CD8-positive, alpha-beta T cell (primary cell): ENCODE measurements at regions of chr17 and their contacts with region 1.

Region 1: DNA sequence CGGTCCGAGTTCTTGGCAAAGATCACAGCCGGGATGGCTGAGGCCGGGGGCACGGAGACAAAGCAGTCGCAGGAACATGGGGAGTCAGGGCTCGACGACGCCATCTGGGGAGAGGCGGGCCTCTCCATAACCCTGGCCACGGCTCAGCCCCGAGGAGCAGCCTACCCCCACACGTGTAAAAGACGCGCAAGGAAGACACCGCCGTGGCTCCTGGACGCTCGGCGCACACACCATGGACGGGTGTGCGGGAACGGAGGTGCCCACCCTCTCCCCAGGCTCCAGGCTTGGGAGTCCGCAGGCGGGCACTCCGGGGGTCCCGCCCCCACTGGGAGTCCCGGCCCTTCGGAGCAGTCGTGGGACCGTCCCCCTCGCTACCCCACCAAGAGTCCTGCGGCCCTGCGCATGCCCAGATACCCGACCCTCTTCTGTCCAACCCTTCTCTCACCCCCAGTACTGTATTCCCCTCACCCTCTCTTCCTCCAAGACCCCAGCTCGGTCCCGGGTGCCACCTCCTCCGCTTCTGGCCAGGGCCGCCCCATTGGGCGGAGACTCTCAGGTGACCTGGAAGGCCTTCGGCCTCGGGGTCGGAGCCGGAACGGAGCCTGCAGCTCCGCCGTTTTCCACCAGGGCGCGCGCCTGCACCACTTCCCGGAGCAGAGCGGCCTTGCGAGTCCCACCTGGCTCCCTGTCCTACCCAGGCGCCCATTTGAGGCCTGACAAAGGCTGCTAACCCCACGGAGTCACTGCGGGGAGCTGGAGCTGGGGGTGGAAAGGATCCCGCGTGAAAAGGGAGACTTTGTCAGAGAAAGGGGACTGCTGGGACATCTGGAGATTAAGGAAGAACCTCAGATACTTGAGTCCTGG is at the start of gene SCRN2:
- DNase-seq: peak; percentile 71 to 93 (median 88)
- ATAC-seq: peak; percentile 91
- H3K4me3 ChIP-seq: peak within 1 kb of the TSS; percentile 86 to 97
- H3K4me3 Mint-ChIP-seq: peak within 1 kb of the TSS; percentile 92
- H3K27ac ChIP-seq: peak within 1 kb of the TSS; percentile 58 to 61
- H3K27ac Mint-ChIP-seq: peak within 1 kb of the TSS; percentile 87
- H3K4me1 ChIP-seq: peaks cover 33% of the 10 kb centered on the region
- H3K4me1 Mint-ChIP-seq: peaks cover 28% of the 10 kb centered on the region
- H3K27me3 ChIP-seq: peaks cover 8 to 12% of the 10 kb centered on the region in 2 experiments
- H3K27me3 Mint-ChIP-seq: peaks cover 24% of the 10 kb centered on the region
- CTCF ChIP-seq: peak; percentile 97
- total RNA-seq, gene SCRN2: 17.6 to 19.8 TPM

Region 2: DNA sequence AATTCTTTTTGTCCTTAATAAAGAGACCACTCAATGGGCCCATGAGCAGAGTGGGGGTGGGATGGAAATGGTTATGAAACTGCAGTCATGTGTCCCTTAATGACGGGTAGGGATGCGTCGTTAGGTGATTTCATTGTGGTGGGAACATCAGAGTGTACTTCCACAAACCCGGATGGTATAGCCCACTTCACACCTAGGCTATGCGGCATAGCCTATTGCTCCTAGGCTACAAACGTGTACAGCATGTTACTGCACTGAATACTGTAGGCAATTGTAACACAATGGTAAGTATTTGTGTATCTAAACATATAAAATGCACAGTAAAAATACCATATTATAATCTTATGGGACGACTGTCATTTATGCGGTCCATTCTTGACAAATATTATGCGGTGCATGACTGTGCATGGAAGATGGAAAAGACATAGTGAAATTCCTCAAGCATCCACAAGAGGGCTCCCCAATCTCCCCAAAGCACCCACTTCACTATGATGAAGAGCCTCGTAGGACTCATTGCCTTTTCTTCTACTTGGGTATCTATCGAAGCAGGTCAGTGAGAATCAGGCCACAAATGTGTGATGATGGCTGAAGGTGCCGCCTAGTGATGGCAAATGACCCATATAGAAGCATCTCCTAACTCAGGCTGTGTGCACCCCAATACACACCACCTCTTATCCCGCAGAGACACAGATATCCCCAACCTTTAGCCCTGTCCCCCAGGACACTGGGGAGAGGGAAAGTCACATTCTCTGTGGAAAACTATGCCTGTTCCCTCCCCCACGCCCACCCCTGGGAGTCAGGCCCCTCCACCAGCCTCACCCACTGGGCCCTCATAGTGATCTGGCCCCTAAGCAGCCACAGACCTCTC is 64.4 kb before region 1 on chr17:
- CTCF ChIA-PET with region 1: no interaction called
- POLR2A ChIA-PET with region 1: no interaction called
- intact Hi-C with region 1: loop called in 1 of 2 experiments (anchors 2 kb)
- DNase-seq: peak in 6 of 9 experiments; percentile 24 to 73 (median 32)
- ATAC-seq: peak; percentile 96
- H3K4me3 ChIP-seq: no peak overlapping the region
- H3K4me3 Mint-ChIP-seq: no peak overlapping the region
- H3K27ac ChIP-seq: no peak overlapping the region
- H3K27ac Mint-ChIP-seq: no peak overlapping the region
- H3K4me1 ChIP-seq: no peaks in the 10 kb centered on the region
- H3K4me1 Mint-ChIP-seq: peaks cover 3% of the 10 kb centered on the region
- H3K27me3 ChIP-seq: peaks cover 8 to 11% of the 10 kb centered on the region in 2 experiments
- H3K27me3 Mint-ChIP-seq: peaks cover 41% of the 10 kb centered on the region
- CTCF ChIP-seq: peak; percentile 88

Region 3: DNA sequence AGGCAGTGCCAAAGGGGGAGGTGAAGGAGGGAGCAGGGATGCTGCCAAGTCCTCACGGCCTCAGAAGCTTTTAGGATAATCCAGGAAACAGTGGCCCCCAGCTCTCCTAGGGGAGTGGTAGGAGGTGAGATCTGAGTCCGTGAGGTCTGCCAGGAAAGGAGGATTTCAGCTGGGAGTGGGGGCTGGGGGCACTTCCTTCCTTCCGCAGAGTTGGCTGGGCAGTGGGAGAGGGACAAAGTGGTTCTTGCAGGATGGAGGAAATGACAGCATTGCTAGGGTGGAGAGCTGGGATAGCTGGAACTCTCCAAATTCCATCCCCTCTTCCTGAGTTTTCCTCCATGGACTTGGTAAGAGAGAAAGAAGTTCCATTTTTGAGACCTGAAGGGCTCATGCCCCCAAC is 14.8 kb after region 1 on chr17:
- CTCF ChIA-PET with region 1: interaction called, 21 read pairs
- POLR2A ChIA-PET with region 1: no interaction called
- intact Hi-C with region 1: no loop called
- DNase-seq: no peak
- ATAC-seq: no peak
- H3K4me3 ChIP-seq: no peak overlapping the region
- H3K4me3 Mint-ChIP-seq: no peak overlapping the region
- H3K27ac ChIP-seq: no peak overlapping the region
- H3K27ac Mint-ChIP-seq: no peak overlapping the region
- H3K4me1 ChIP-seq: peaks cover 21% of the 10 kb centered on the region
- H3K4me1 Mint-ChIP-seq: peaks cover 9% of the 10 kb centered on the region
- H3K27me3 ChIP-seq: peaks cover 16 to 23% of the 10 kb centered on the region in 2 experiments
- H3K27me3 Mint-ChIP-seq: peaks cover 61% of the 10 kb centered on the region
- CTCF ChIP-seq: no peak

Region 4: GRCh38 chr17:47889734-47890529 is 49.0 kb after region 1 on chr17:
- CTCF ChIA-PET with region 1: interaction called, 583 read pairs
- POLR2A ChIA-PET with region 1: interaction called, 26 read pairs
- intact Hi-C with region 1: loop called (anchors 1 kb)
- DNase-seq: peak; percentile 80 to 97 (median 90)
- ATAC-seq: peak; percentile 99
- H3K4me3 ChIP-seq: no peak overlapping the region
- H3K4me3 Mint-ChIP-seq: no peak overlapping the region
- H3K27ac ChIP-seq: no peak overlapping the region
- H3K27ac Mint-ChIP-seq: no peak overlapping the region
- H3K4me1 ChIP-seq: peaks cover 22% of the 10 kb centered on the region
- H3K4me1 Mint-ChIP-seq: peaks cover 29% of the 10 kb centered on the region
- H3K27me3 ChIP-seq: no peaks in the 10 kb centered on the region
- H3K27me3 Mint-ChIP-seq: no peaks in the 10 kb centered on the region
- CTCF ChIP-seq: peak; percentile 96

Region 5: GRCh38 chr17:47941236-47941994 is 100.4 kb after region 1 on chr17 and contains the start of gene PNPO:
- CTCF ChIA-PET with region 1: interaction called, 6 read pairs
- POLR2A ChIA-PET with region 1: no interaction called
- intact Hi-C with region 1: loop called in 1 of 2 experiments (anchors 1 kb)
- DNase-seq: peak; percentile 82 to 98 (median 92)
- ATAC-seq: peak; percentile 97
- H3K4me3 ChIP-seq: peak within 1 kb of the TSS; percentile 72 to 92
- H3K4me3 Mint-ChIP-seq: peak within 1 kb of the TSS; percentile 86
- H3K27ac ChIP-seq: peak within 1 kb of the TSS; percentile 57 to 88
- H3K27ac Mint-ChIP-seq: peak within 1 kb of the TSS; percentile 87
- H3K4me1 ChIP-seq: peaks cover 47% of the 10 kb centered on the region
- H3K4me1 Mint-ChIP-seq: peaks cover 54% of the 10 kb centered on the region
- H3K27me3 ChIP-seq: no peaks in the 10 kb centered on the region
- H3K27me3 Mint-ChIP-seq: no peaks in the 10 kb centered on the region
- CTCF ChIP-seq: no peak
- total RNA-seq, gene PNPO: 5.7 to 5.8 TPM

Region 6: DNA sequence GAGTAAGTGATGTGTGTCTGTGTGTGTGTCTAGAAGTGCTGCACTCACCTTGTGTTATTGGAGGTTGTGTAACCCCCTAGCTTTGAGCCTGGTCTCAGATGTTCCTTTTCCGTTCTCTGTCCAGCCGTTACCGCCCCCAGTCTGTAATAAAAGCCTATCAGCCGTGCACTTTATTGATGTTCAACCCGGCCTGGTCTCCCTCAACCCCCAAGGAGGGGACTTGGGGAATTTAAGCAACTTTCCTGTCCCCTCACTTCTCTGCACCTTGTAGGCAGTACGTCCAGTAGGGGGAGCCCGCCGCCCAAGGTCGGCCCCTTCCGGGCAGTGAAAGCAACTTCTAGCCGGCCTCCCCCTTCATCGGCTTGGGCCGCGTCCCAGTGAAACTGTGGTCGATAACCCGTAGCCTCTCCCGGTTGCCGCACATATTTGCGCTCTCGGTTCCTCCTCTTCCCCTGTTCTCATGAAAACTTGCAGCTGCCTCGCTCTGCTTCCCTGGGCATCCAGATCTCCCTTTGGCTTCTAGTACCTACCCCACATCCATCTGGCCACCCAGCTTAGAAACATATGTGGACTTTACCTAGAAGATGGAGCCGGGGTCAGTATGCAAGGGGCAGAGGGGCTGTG is 108.3 kb after region 1 on chr17:
- CTCF ChIA-PET with region 1: interaction called, 13 read pairs
- POLR2A ChIA-PET with region 1: interaction called, 3 read pairs
- intact Hi-C with region 1: no loop called
- DNase-seq: peak; percentile 47 to 88 (median 79)
- ATAC-seq: peak; percentile 53
- H3K4me3 ChIP-seq: peak overlapping the region; percentile 26 to 36
- H3K4me3 Mint-ChIP-seq: peak overlapping the region; percentile 82
- H3K27ac ChIP-seq: peak overlapping the region in 1 of 2 experiments; percentile 28
- H3K27ac Mint-ChIP-seq: peak overlapping the region; percentile 81
- H3K4me1 ChIP-seq: peaks cover 51% of the 10 kb centered on the region
- H3K4me1 Mint-ChIP-seq: peaks cover 46% of the 10 kb centered on the region
- H3K27me3 ChIP-seq: no peaks in the 10 kb centered on the region
- H3K27me3 Mint-ChIP-seq: no peaks in the 10 kb centered on the region
- CTCF ChIP-seq: peak; percentile 78